ENCODE measurements at regions of chr17 and their contacts with region 1.

Region 1: GRCh38 chr17:3551189-3551588 is 6.4 kb downstream of the TRPV3 start:
- DNase-seq: no peak
- ATAC-seq: no peak
- H3K4me3 ChIP-seq: no peak overlapping the region
- H3K4me3 Mint-ChIP-seq: no peak overlapping the region
- H3K27ac ChIP-seq: no peak overlapping the region
- H3K27ac Mint-ChIP-seq: no peak overlapping the region
- H3K4me1 ChIP-seq: no peaks in the 10 kb centered on the region
- H3K4me1 Mint-ChIP-seq: no peaks in the 10 kb centered on the region
- H3K27me3 ChIP-seq: peaks cover 0 to 35% of the 10 kb centered on the region in 2 experiments
- H3K27me3 Mint-ChIP-seq: peaks cover 9 to 16% of the 10 kb centered on the region in 2 donors

Region 2: DNA sequence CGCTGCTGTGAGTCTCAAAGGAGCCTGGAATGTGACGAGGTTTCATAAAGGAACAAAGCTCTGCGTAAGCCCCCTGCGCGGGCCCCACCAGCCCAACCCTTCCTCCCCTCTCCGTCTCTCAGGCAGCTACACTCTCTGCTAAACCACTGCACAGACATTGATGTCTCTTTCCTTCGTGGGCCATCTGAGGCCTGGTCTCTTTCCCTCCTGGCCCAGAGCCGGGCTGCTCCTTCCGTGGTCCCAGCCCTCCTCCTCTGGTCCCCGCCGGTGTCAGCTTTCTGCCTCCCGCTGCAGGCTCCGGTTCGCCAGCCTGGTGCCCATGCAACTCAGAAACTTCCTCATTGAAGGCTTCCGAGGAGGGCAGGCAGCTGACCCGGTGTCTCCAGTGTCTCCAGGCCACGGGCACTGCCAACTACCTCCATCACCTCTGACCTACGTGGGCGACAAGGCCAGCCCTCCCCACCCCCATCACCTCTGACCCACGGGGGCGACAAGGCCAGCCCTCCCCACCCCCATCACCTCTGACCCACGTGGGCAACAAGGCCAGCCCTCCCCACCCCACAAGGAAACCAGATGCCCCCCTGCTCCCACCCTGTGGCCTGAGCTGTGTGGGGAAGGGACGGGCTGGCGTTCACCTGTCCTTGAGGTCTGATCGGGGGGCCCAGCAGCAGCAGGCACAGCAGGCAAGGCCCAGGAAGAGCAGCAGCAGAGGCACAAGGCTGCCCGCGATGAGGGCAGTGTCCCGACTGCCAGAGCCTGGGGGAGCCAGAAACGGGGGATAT is 1912.8 kb before region 1 on chr17:
- CTCF ChIA-PET with region 1: no interaction called
- POLR2A ChIA-PET with region 1: interaction called in 1 of 2 experiments, 11 read pairs
- DNase-seq: no peak
- ATAC-seq: no peak
- H3K4me3 ChIP-seq: no peak overlapping the region
- H3K4me3 Mint-ChIP-seq: no peak overlapping the region
- H3K27ac ChIP-seq: no peak overlapping the region
- H3K27ac Mint-ChIP-seq: peak overlapping the region in 1 of 2 donors; percentile 27
- H3K4me1 ChIP-seq: no peaks in the 10 kb centered on the region
- H3K4me1 Mint-ChIP-seq: peaks cover 0 to 2% (median 0%) of the 10 kb centered on the region in 3 donors
- H3K27me3 ChIP-seq: no peaks in the 10 kb centered on the region
- H3K27me3 Mint-ChIP-seq: no peaks in the 10 kb centered on the region

Measured in T-cell (primary cell).